Transverse colon (tissue), 4 donors: ENCODE measurements at regions of chrX and their contacts with region 1.

Region 1: GRCh38 chrX:114134465-114134864 is 449.4 kb upstream of the HTR2C start:
- DNase-seq: no peak
- H3K4me3 ChIP-seq: no peak overlapping the region
- H3K27ac ChIP-seq: no peak overlapping the region
- H3K4me1 ChIP-seq: no peaks in the 10 kb centered on the region
- H3K27me3 ChIP-seq: no peaks in the 10 kb centered on the region
- CTCF ChIP-seq: no peak
- EP300 ChIP-seq: no peak
- POLR2A ChIP-seq: no peak

Region 2: DNA sequence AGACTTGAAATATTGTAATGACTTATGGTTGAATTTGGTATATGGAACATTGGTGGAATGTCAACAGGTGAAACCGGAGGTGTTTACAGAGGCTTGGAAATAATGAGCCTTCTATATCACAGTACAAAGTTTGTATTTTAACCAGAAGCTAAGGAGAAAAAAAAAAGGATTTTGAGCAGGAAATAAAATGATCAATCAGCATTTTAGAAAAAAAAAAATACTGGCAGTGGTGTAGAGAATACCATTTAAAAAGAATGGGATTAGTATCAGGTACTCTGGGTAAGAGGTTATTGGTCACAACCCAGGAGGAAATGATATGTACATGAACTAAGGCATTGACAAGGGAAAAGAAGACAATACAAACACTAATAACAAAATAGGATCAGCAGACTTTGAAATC is 137.7 kb before region 1 on chrX:
- in situ Hi-C with region 1: no loop called
- intact Hi-C with region 1: no loop called
- DNase-seq: no peak
- H3K4me3 ChIP-seq: no peak overlapping the region
- H3K27ac ChIP-seq: no peak overlapping the region
- H3K4me1 ChIP-seq: no peaks in the 10 kb centered on the region
- H3K27me3 ChIP-seq: no peaks in the 10 kb centered on the region
- CTCF ChIP-seq: no peak
- EP300 ChIP-seq: no peak
- POLR2A ChIP-seq: no peak

Region 3: DNA sequence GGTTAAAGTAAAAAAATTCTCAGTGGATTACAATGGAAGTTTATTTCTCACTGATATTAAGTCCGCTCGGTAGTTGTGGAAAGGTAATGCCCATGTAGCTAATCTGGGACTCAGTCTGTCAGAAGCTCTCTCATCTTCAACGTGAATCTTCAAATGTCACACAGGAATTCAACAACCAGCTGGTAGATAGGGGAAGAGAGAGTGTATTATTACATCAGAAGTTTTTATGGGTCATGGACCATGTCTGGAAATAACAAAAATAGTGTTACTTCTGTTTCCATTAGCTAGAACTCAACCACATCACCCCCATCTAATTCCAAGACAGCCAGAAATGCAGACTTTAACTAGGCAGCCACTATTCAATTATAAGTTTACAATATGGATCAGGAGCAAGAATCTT is 56.7 kb before region 1 on chrX:
- in situ Hi-C with region 1: no loop called
- intact Hi-C with region 1: no loop called
- DNase-seq: no peak
- H3K4me3 ChIP-seq: no peak overlapping the region
- H3K27ac ChIP-seq: no peak overlapping the region
- H3K4me1 ChIP-seq: no peaks in the 10 kb centered on the region
- H3K27me3 ChIP-seq: no peaks in the 10 kb centered on the region
- CTCF ChIP-seq: no peak
- EP300 ChIP-seq: no peak
- POLR2A ChIP-seq: no peak

Region 4: GRCh38 chrX:114162080-114162735 is 27.7 kb after region 1 on chrX:
- in situ Hi-C with region 1: no loop called
- intact Hi-C with region 1: loop called (anchors 1 kb)
- DNase-seq: no peak
- H3K4me3 ChIP-seq: no peak overlapping the region
- H3K27ac ChIP-seq: no peak overlapping the region
- H3K4me1 ChIP-seq: no peaks in the 10 kb centered on the region
- H3K27me3 ChIP-seq: no peaks in the 10 kb centered on the region
- CTCF ChIP-seq: no peak
- EP300 ChIP-seq: no peak
- POLR2A ChIP-seq: no peak